Mammary epithelial cell (primary cell): ENCODE measurements at regions of chr9 and their contacts with region 1.

Region 1: GRCh38 chr9:128159784-128160602 is at the start of gene BBLN:
- DNase-seq: peak; percentile 89
- H3K4me3 ChIP-seq: peak within 1 kb of the TSS; percentile 84 to 90 (median 89)
- H3K27ac ChIP-seq: peak within 1 kb of the TSS; percentile 60
- H3K4me1 ChIP-seq: peaks cover 17% of the 10 kb centered on the region
- H3K27me3 ChIP-seq: no peaks in the 10 kb centered on the region
- CTCF ChIP-seq: no peak
- total RNA-seq, gene BBLN: 56.9 to 63.3 TPM

Region 2: GRCh38 chr9:128055344-128056040 is 104.5 kb before region 1 on chr9:
- CTCF ChIA-PET with region 1: no interaction called
- dilution Hi-C with region 1: no loop called
- in situ Hi-C with region 1: no loop called
- intact Hi-C with region 1: no loop called
- DNase-seq: no peak
- H3K4me3 ChIP-seq: no peak overlapping the region
- H3K27ac ChIP-seq: no peak overlapping the region
- H3K4me1 ChIP-seq: peaks cover 8% of the 10 kb centered on the region
- H3K27me3 ChIP-seq: no peaks in the 10 kb centered on the region
- CTCF ChIP-seq: no peak

Region 3: DNA sequence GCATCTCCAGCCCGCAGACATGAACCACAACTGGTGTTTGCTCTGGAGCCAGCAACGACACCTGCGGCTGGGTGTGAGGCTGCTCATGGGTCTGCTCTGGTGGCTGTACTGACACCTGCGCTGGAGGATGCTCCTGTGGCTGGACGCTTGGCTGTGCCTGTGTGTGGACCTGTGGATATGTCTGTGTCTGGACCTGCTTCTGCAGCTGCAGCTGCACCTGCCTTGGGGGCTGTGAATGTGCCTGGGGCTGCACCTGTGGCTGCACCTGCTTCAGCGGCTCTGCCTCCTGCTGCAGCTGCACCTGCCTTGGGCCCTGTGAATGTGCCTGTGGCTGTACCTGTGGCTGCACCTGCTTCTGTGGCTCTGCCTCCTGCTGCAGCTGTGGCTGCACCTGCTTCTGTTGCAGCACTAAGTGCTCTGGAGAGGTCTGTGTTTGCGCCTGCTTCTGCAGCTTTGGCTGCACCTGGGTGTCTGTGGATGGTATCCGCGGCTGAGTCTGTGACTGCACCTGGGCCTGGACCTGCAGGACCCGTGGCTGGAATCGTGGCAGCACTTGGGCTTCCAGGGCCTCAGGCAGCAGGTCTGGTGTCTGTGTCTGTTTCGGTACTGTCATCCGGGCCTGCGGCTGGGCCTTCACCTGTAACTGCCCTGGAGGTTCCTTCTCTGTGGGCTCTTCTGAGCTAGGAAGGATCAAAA is 18.9 kb after region 1 on chr9:
- CTCF ChIA-PET with region 1: interaction called, 5 read pairs
- dilution Hi-C with region 1: no loop called
- in situ Hi-C with region 1: no loop called
- intact Hi-C with region 1: loop called (anchors 2 kb)
- DNase-seq: no peak
- H3K4me3 ChIP-seq: no peak overlapping the region
- H3K27ac ChIP-seq: no peak overlapping the region
- H3K4me1 ChIP-seq: no peaks in the 10 kb centered on the region
- H3K27me3 ChIP-seq: no peaks in the 10 kb centered on the region
- CTCF ChIP-seq: no peak